ENCODE measurements at regions of chr5 and their contacts with region 1.

Region 1: GRCh38 chr5:168820874-168821273 is 241.7 kb upstream of the PANK3 start:
- DNase-seq: peak; percentile 74
- H3K4me3 ChIP-seq: no peak overlapping the region
- H3K27ac ChIP-seq: no peak overlapping the region
- H3K4me1 ChIP-seq: peaks cover 13% of the 10 kb centered on the region
- H3K27me3 ChIP-seq: peaks cover 78% of the 10 kb centered on the region
- CTCF ChIP-seq: no peak

Region 2: GRCh38 chr5:168898247-168898911 is 77.5 kb after region 1 on chr5:
- CTCF ChIA-PET with region 1: no interaction called
- POLR2A ChIA-PET with region 1: no interaction called
- intact Hi-C with region 1: loop called (anchors 2 kb)
- DNase-seq: peak; percentile 85
- H3K4me3 ChIP-seq: no peak overlapping the region
- H3K27ac ChIP-seq: no peak overlapping the region
- H3K4me1 ChIP-seq: peaks cover 21% of the 10 kb centered on the region
- H3K27me3 ChIP-seq: peaks cover 64% of the 10 kb centered on the region
- CTCF ChIP-seq: 0 out of 2 replicates have a peak, but pooled peaks have one; percentile 23

Region 3: GRCh38 chr5:169022718-169023117 is 201.8 kb after region 1 on chr5:
- CTCF ChIA-PET with region 1: no interaction called
- POLR2A ChIA-PET with region 1: no interaction called
- intact Hi-C with region 1: no loop called
- DNase-seq: no peak
- H3K4me3 ChIP-seq: no peak overlapping the region
- H3K27ac ChIP-seq: no peak overlapping the region
- H3K4me1 ChIP-seq: no peaks in the 10 kb centered on the region
- H3K27me3 ChIP-seq: peaks cover 41% of the 10 kb centered on the region
- CTCF ChIP-seq: no peak

Measured in A673 (cell line).